Activated CD4-positive, alpha-beta T cell treated with anti-CD3 and anti-CD28 coated beads, Interleukin-2, amount 10 ng/mL, durations not matched to agents 24 days and 14 days (primary cell): ENCODE measurements at regions of chr13 and their contacts with region 1.

Region 1: DNA sequence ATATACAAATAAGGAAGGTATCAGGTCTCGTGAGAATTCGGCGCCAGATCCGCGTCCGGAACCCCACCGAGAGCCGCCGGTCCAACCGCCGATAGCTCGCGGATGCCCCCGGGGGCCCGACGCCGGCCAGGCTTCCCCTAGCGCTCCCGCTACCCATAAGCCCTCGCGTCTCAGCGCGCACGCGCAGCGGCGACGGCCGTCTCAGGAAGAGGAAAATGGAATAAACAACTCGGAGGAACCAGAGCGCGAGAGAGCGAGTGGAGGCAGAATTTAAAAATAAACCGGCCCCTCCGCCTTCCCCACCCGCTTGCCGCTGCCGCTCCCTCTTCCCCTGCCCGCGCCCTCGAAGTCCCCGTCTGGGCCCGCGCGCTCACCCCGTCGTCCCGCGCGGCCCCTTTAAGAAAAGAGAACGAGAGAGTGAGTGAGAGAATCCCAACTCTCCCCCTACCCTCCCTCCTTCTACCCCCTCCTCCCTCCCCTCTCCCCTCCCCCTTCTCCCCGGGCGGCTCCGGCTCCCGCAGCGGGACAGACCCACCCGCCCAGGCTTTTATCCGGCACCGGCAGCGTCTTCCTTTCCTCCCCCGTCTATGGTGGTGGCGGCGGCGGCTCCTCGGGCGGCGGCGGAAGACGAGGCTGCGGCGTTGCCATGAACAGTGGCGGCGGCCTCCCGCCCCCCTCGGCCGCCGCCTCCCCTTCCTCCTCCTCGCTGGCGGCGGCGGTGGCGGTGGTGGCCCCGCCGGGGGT is at the start of gene PAN3:
- DNase-seq: peak; percentile 98
- H3K4me3 Mint-ChIP-seq: peak within 1 kb of the TSS; percentile 88
- H3K27ac Mint-ChIP-seq: peak within 1 kb of the TSS; percentile 95
- H3K4me1 Mint-ChIP-seq: peaks cover 42% of the 10 kb centered on the region
- H3K27me3 Mint-ChIP-seq: no peaks in the 10 kb centered on the region
- total RNA-seq, gene PAN3: 31.2 and 32.7 TPM in 2 replicates

Region 2: GRCh38 chr13:27424246-27425157 is 713.7 kb before region 1 on chr13 and contains the start of gene GTF3A:
- intact Hi-C with region 1: loop called (anchors 10 kb)
- DNase-seq: peak; percentile 97
- H3K4me3 Mint-ChIP-seq: peak within 1 kb of the TSS; percentile 86
- H3K27ac Mint-ChIP-seq: peak within 1 kb of the TSS; percentile 95
- H3K4me1 Mint-ChIP-seq: peaks cover 35% of the 10 kb centered on the region
- H3K27me3 Mint-ChIP-seq: no peaks in the 10 kb centered on the region
- total RNA-seq, gene GTF3A: 279 and 284 TPM in 2 replicates

Region 3: GRCh38 chr13:27620377-27621115 is 517.6 kb before region 1 on chr13 and contains the start of gene LNX2:
- intact Hi-C with region 1: loop called (anchors 2 kb)
- DNase-seq: peak; percentile 99
- H3K4me3 Mint-ChIP-seq: peak within 1 kb of the TSS; percentile 98
- H3K27ac Mint-ChIP-seq: peak within 1 kb of the TSS; percentile 93
- H3K4me1 Mint-ChIP-seq: peaks cover 44% of the 10 kb centered on the region
- H3K27me3 Mint-ChIP-seq: no peaks in the 10 kb centered on the region
- total RNA-seq, gene LNX2: 4.1 and 4.3 TPM in 2 replicates

Region 4: GRCh38 chr13:28204690-28205443 is 66.7 kb after region 1 on chr13:
- intact Hi-C with region 1: loop called (anchors 1 kb)
- DNase-seq: no peak
- H3K4me3 Mint-ChIP-seq: peak overlapping the region; percentile 28
- H3K27ac Mint-ChIP-seq: peak overlapping the region; percentile 74
- H3K4me1 Mint-ChIP-seq: peaks cover 17% of the 10 kb centered on the region
- H3K27me3 Mint-ChIP-seq: no peaks in the 10 kb centered on the region

Region 5: GRCh38 chr13:28494776-28495537 is 356.8 kb after region 1 on chr13 and contains the start of gene FLT1:
- intact Hi-C with region 1: loop called (anchors 2 kb)
- DNase-seq: peak; percentile 84
- H3K4me3 Mint-ChIP-seq: peak within 1 kb of the TSS; percentile 85
- H3K27ac Mint-ChIP-seq: peak within 1 kb of the TSS; percentile 72
- H3K4me1 Mint-ChIP-seq: peaks cover 21% of the 10 kb centered on the region
- H3K27me3 Mint-ChIP-seq: peaks cover 36% of the 10 kb centered on the region
- total RNA-seq, gene FLT1: 46.3 and 46.7 TPM in 2 replicates

Region 6: DNA sequence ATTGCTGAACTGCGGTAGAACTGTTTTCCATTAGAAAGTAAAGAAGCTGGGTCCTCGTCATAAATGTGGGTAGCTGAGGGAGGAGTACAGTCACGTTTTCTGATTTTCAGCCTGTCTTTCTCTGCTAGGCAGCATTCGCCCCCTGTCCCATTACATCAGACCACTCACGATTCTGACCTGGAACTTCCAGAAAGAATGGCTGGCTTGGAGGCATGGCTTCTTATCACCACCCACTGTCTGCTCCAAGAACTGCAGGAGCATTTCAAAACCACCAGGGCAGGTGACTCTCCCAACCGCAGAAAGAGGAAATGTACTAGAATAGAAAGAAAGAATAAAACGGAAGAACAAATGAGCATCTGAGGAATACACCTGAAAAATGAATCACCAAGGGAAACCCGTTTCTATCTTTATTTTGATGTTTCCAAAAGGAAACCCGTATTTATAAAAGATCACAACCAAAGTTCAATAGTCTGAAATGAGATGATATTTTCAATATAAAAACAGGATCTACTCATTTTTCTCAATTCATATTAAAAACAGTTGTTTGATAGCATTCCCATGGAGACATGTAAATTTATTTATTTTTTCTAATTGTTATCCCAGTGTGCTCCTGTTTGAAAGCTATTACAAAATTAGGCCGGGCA is 498.6 kb after region 1 on chr13:
- intact Hi-C with region 1: loop called (anchors 5 kb)
- DNase-seq: peak; percentile 85
- H3K4me3 Mint-ChIP-seq: peak overlapping the region; percentile 48
- H3K27ac Mint-ChIP-seq: peak overlapping the region; percentile 1
- H3K4me1 Mint-ChIP-seq: peaks cover 12% of the 10 kb centered on the region
- H3K27me3 Mint-ChIP-seq: peaks cover 25% of the 10 kb centered on the region